ENCODE measurements at regions of chr1 and their contacts with region 1.

Region 1: GRCh38 chr1:206808615-206809014 is 36.3 kb upstream of the IL10 start:
- DNase-seq: peak in 30 of 35 experiments; percentile 14 to 82 (median 46)
- ATAC-seq: peak; percentile 78 to 84 (median 82)
- H3K4me3 ChIP-seq: no peak overlapping the region
- H3K4me3 Mint-ChIP-seq: peak overlapping the region in 1 of 3 donors; percentile 18
- H3K27ac ChIP-seq: no peak overlapping the region
- H3K27ac Mint-ChIP-seq: no peak overlapping the region
- H3K4me1 ChIP-seq: peaks cover 10 to 23% of the 10 kb centered on the region in 2 experiments
- H3K4me1 Mint-ChIP-seq: peaks cover 37 to 56% (median 53%) of the 10 kb centered on the region in 3 donors
- H3K27me3 ChIP-seq: no peaks in the 10 kb centered on the region
- H3K27me3 Mint-ChIP-seq: peaks cover 0 to 1% of the 10 kb centered on the region in 2 donors

Region 2: GRCh38 chr1:205344066-205344928 is 1464.3 kb before region 1 on chr1:
- CTCF ChIA-PET with region 1: no interaction called
- POLR2A ChIA-PET with region 1: no interaction called
- DNase-seq: peak in 32 of 35 experiments; percentile 11 to 56 (median 34)
- ATAC-seq: peak; percentile 83 to 90 (median 86)
- H3K4me3 ChIP-seq: peak overlapping the region; percentile 34 to 46
- H3K4me3 Mint-ChIP-seq: peak overlapping the region; percentile 55 to 75 (median 67)
- H3K27ac ChIP-seq: no peak overlapping the region
- H3K27ac Mint-ChIP-seq: peak overlapping the region in 1 of 2 donors; percentile 48
- H3K4me1 ChIP-seq: peaks cover 0 to 21% of the 10 kb centered on the region in 2 experiments
- H3K4me1 Mint-ChIP-seq: peaks cover 11 to 15% (median 13%) of the 10 kb centered on the region in 3 donors
- H3K27me3 ChIP-seq: peaks cover 0 to 47% of the 10 kb centered on the region in 2 experiments
- H3K27me3 Mint-ChIP-seq: peaks cover 46 to 51% of the 10 kb centered on the region in 2 donors

Region 3: GRCh38 chr1:206725109-206725963 is 83.3 kb before region 1 on chr1:
- CTCF ChIA-PET with region 1: interaction called, 3 to 12 read pairs
- POLR2A ChIA-PET with region 1: no interaction called
- DNase-seq: peak in 32 of 35 experiments; percentile 11 to 81 (median 60)
- ATAC-seq: peak; percentile 44 to 62 (median 52)
- H3K4me3 ChIP-seq: no peak overlapping the region
- H3K4me3 Mint-ChIP-seq: no peak overlapping the region
- H3K27ac ChIP-seq: no peak overlapping the region
- H3K27ac Mint-ChIP-seq: peak overlapping the region; percentile 17 to 39
- H3K4me1 ChIP-seq: peaks cover 8 to 54% of the 10 kb centered on the region in 2 experiments
- H3K4me1 Mint-ChIP-seq: peaks cover 43 to 60% (median 55%) of the 10 kb centered on the region in 3 donors
- H3K27me3 ChIP-seq: no peaks in the 10 kb centered on the region
- H3K27me3 Mint-ChIP-seq: no peaks in the 10 kb centered on the region

Region 4: DNA sequence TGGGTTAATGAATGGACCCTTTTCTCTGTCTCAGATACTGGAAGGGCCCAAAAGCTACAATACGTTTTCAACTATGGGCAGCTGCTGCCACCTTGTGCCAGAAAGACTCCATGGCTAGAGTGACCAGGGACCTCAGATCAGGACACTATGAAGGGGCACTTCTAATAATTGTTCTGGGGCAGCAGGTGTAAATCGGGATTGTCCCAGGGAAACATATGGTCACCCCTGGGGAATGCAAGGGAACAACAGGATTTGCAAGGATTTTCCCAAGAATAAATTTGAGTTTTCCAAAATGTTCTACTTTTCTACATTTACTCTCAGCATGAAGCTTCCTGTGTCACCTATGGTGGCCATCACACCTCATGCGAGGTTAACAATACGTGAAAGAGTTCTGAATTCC is 173.6 kb after region 1 on chr1:
- CTCF ChIA-PET with region 1: interaction called, 3 to 16 read pairs
- POLR2A ChIA-PET with region 1: no interaction called
- DNase-seq: peak; percentile 16 to 75 (median 53)
- ATAC-seq: peak; percentile 71 to 85 (median 80)
- H3K4me3 ChIP-seq: no peak overlapping the region
- H3K4me3 Mint-ChIP-seq: no peak overlapping the region
- H3K27ac ChIP-seq: no peak overlapping the region
- H3K27ac Mint-ChIP-seq: no peak overlapping the region
- H3K4me1 ChIP-seq: no peaks in the 10 kb centered on the region
- H3K4me1 Mint-ChIP-seq: no peaks in the 10 kb centered on the region
- H3K27me3 ChIP-seq: peaks cover 0 to 10% of the 10 kb centered on the region in 2 experiments
- H3K27me3 Mint-ChIP-seq: peaks cover 12 to 29% of the 10 kb centered on the region in 2 donors